CD8-positive, alpha-beta T cell (primary cell): ENCODE measurements at regions of chr20 and their contacts with region 1.

Region 1: GRCh38 chr20:35619196-35620095 is 3.8 kb downstream of the SPAG4 start:
- DNase-seq: peak; percentile 57 to 91 (median 76)
- ATAC-seq: peak; percentile 8
- H3K4me3 ChIP-seq: peak overlapping the region; percentile 64 to 69
- H3K4me3 Mint-ChIP-seq: peak overlapping the region; percentile 90
- H3K27ac ChIP-seq: peak overlapping the region in 1 of 2 experiments; percentile 25
- H3K27ac Mint-ChIP-seq: peak overlapping the region; percentile 75
- H3K4me1 ChIP-seq: peaks cover 27% of the 10 kb centered on the region
- H3K4me1 Mint-ChIP-seq: peaks cover 35% of the 10 kb centered on the region
- H3K27me3 ChIP-seq: peaks cover 0 to 4% of the 10 kb centered on the region in 2 experiments
- H3K27me3 Mint-ChIP-seq: no peaks in the 10 kb centered on the region
- CTCF ChIP-seq: peak; percentile 52

Region 2: DNA sequence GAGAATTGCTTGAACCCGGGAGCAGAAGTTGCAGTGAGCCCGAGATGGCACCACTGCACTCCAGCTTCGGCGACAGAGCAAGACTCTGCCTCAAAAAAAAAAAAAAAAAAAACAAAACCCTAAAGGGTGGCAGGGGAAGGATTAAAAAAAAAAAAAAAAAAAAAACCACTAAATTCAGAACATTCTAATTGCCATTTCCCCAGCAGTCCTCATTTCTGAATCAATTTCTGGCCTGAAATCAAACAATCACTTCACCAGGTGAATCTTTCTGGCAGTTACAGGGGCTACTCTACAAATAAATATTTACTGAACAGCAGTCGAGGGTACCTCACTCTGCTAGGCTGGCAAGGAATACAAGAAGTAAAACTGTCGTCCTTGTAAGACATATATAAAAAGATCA is 208.8 kb before region 1 on chr20:
- CTCF ChIA-PET with region 1: no interaction called
- POLR2A ChIA-PET with region 1: no interaction called
- intact Hi-C with region 1: loop called in 1 of 2 experiments (anchors 1 kb)
- DNase-seq: no peak
- ATAC-seq: no peak
- H3K4me3 ChIP-seq: no peak overlapping the region
- H3K4me3 Mint-ChIP-seq: peak overlapping the region; percentile 96
- H3K27ac ChIP-seq: no peak overlapping the region
- H3K27ac Mint-ChIP-seq: peak overlapping the region; percentile 97
- H3K4me1 ChIP-seq: peaks cover 8% of the 10 kb centered on the region
- H3K4me1 Mint-ChIP-seq: peaks cover 25% of the 10 kb centered on the region
- H3K27me3 ChIP-seq: no peaks in the 10 kb centered on the region
- H3K27me3 Mint-ChIP-seq: no peaks in the 10 kb centered on the region
- CTCF ChIP-seq: no peak

Region 3: DNA sequence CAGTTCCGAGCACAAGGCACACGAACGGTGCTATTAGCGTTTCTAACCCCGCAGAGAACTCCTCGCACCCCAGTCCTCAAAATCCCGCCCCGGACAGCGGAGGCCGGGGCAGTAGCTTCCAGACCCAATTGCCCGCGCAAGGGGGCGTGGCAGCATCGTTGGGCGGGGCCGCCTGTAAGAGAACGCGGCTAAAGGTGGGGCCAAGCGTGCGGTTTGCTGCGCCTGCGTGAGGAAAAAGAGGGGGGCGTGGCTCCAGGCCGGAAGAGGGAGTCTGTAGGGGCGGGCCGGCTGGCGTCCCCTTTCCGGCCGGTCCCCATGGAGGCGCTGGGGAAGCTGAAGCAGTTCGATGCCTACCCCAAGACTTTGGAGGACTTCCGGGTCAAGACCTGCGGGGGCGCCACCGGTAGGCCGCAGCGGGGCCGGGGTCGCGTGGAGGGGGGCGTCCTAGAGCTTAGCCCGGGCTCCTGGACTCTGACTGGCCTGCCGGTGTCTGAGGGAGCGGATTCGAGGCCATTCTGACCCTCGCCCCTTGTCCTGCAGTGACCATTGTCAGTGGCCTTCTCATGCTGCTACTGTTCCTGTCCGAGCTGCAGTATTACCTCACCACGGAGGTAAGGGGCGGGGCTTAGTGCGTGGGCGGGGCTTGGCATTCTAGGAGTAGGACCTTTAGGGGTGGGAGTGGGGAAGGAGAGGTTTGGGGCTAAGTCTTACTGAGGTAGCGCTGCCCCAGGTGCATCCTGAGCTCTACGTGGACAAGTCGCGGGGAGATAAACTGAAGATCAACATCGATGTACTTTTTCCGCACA is 77.5 kb before region 1 on chr20 and contains the start of gene ERGIC3:
- CTCF ChIA-PET with region 1: interaction called, 5 read pairs
- POLR2A ChIA-PET with region 1: interaction called, 7 read pairs
- intact Hi-C with region 1: loop called (anchors 1 kb)
- DNase-seq: peak; percentile 93 to 98 (median 97)
- ATAC-seq: peak; percentile 97
- H3K4me3 ChIP-seq: peak within 1 kb of the TSS; percentile 81 to 94
- H3K4me3 Mint-ChIP-seq: peak within 1 kb of the TSS; percentile 89
- H3K27ac ChIP-seq: peak within 1 kb of the TSS; percentile 71 to 86
- H3K27ac Mint-ChIP-seq: peak within 1 kb of the TSS; percentile 89
- H3K4me1 ChIP-seq: peaks cover 14% of the 10 kb centered on the region
- H3K4me1 Mint-ChIP-seq: peaks cover 27% of the 10 kb centered on the region
- H3K27me3 ChIP-seq: no peaks in the 10 kb centered on the region
- H3K27me3 Mint-ChIP-seq: no peaks in the 10 kb centered on the region
- CTCF ChIP-seq: no peak
- total RNA-seq, gene ERGIC3: 149 TPM

Region 4: GRCh38 chr20:35652641-35653429 is 33.4 kb after region 1 on chr20:
- CTCF ChIA-PET with region 1: interaction called, 5 read pairs
- POLR2A ChIA-PET with region 1: interaction called, 4 read pairs
- intact Hi-C with region 1: loop called in 1 of 2 experiments (anchors 1 kb)
- DNase-seq: no peak
- ATAC-seq: no peak
- H3K4me3 ChIP-seq: no peak overlapping the region
- H3K4me3 Mint-ChIP-seq: no peak overlapping the region
- H3K27ac ChIP-seq: no peak overlapping the region
- H3K27ac Mint-ChIP-seq: no peak overlapping the region
- H3K4me1 ChIP-seq: peaks cover 36% of the 10 kb centered on the region
- H3K4me1 Mint-ChIP-seq: peaks cover 60% of the 10 kb centered on the region
- H3K27me3 ChIP-seq: no peaks in the 10 kb centered on the region
- H3K27me3 Mint-ChIP-seq: no peaks in the 10 kb centered on the region
- CTCF ChIP-seq: no peak

Region 5: DNA sequence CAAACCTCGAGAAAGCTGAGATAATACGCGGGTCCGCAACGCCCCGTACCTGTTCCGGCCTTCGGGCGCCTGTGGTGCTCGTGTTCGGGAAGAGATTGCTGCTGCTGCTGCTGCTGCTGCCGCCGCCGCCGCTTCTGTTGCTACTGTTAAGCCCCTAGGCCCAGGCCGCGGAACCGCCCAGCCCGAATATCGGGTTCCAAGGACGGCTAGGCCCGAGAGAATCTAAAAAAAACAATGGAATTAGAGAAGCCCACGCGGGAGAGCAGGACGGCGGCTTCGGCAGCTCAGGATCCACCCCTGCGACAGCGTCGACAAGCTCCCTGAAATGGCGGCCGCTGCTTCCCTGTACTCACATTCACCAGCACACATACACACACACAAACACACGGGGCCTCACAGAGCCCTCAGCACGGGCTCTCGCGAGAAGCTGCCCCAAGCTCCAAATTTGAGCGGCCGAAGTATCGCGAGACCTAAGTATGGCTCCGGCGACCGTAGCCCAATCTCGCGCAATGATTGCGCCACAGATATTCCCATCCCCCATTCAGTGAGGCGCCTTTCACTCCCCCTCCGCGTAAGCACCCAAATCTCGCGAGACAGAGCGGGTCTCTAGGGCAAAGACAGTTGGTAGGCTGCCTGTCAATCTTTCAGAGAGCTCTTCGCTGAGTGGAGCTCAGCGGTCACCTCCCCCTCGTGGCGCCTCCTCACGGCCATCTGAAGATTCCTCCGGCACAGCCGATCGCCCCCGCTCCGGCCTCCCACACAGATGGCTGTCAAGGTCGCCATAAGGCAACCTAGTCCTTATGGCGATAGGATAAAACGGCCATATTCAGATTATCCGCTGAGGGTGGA is 122.7 kb after region 1 on chr20 and contains the start of gene RBM39:
- CTCF ChIA-PET with region 1: interaction called, 7 read pairs
- POLR2A ChIA-PET with region 1: interaction called, 25 read pairs
- intact Hi-C with region 1: loop called in 1 of 2 experiments (anchors 1 kb)
- DNase-seq: peak; percentile 97 to 100 (median 99)
- ATAC-seq: peak; percentile 81
- H3K4me3 ChIP-seq: peak within 1 kb of the TSS; percentile 87 to 98
- H3K4me3 Mint-ChIP-seq: peak within 1 kb of the TSS; percentile 96
- H3K27ac ChIP-seq: peak within 1 kb of the TSS; percentile 99 to 100
- H3K27ac Mint-ChIP-seq: peak within 1 kb of the TSS; percentile 100
- H3K4me1 ChIP-seq: peaks cover 44% of the 10 kb centered on the region
- H3K4me1 Mint-ChIP-seq: peaks cover 47% of the 10 kb centered on the region
- H3K27me3 ChIP-seq: no peaks in the 10 kb centered on the region
- H3K27me3 Mint-ChIP-seq: no peaks in the 10 kb centered on the region
- CTCF ChIP-seq: peak; percentile 44
- total RNA-seq, gene RBM39: 1,168 to 1,202 TPM

Region 6: GRCh38 chr20:36010825-36011224 is 391.4 kb after region 1 on chr20:
- CTCF ChIA-PET with region 1: no interaction called
- POLR2A ChIA-PET with region 1: no interaction called
- intact Hi-C with region 1: no loop called
- DNase-seq: no peak
- ATAC-seq: no peak
- H3K4me3 ChIP-seq: no peak overlapping the region
- H3K4me3 Mint-ChIP-seq: no peak overlapping the region
- H3K27ac ChIP-seq: no peak overlapping the region
- H3K27ac Mint-ChIP-seq: no peak overlapping the region
- H3K4me1 ChIP-seq: no peaks in the 10 kb centered on the region
- H3K4me1 Mint-ChIP-seq: no peaks in the 10 kb centered on the region
- H3K27me3 ChIP-seq: no peaks in the 10 kb centered on the region
- H3K27me3 Mint-ChIP-seq: no peaks in the 10 kb centered on the region
- CTCF ChIP-seq: no peak